PC-3 (cell line): ENCODE measurements at regions of chr3 and their contacts with region 1.

Region 1: DNA sequence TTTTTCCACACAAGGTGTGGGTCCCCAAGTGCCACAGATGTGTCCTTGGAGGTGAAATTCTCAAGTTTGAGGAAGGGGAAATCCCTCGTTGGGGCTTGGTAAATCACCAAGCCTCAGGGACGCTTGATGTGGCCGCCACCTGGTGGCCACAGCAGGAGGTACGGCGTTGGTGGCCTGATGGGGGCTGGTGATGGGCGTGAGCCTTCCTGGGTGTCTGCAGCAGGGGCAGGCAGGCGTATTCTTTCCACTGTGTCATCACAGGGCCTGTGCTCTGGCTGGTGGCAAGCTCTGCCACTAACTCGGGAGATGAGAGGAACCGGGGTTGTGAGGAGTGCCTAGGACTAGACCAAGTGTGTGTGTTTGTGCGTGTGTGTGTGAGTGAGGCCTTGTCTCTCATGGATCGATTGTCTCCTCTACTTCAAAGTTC is 4.2 kb downstream of the ACOX2 start:
- DNase-seq: peak; percentile 90
- ATAC-seq: peak; percentile 87
- H3K4me3 ChIP-seq: no peak overlapping the region
- H3K27ac ChIP-seq: no peak overlapping the region
- H3K4me1 ChIP-seq: peaks cover 12% of the 10 kb centered on the region; the same call in 1 of the 2 replicates
- H3K27me3 ChIP-seq: no peaks in the 10 kb centered on the region
- CTCF ChIP-seq: peak; percentile 97

Region 2: DNA sequence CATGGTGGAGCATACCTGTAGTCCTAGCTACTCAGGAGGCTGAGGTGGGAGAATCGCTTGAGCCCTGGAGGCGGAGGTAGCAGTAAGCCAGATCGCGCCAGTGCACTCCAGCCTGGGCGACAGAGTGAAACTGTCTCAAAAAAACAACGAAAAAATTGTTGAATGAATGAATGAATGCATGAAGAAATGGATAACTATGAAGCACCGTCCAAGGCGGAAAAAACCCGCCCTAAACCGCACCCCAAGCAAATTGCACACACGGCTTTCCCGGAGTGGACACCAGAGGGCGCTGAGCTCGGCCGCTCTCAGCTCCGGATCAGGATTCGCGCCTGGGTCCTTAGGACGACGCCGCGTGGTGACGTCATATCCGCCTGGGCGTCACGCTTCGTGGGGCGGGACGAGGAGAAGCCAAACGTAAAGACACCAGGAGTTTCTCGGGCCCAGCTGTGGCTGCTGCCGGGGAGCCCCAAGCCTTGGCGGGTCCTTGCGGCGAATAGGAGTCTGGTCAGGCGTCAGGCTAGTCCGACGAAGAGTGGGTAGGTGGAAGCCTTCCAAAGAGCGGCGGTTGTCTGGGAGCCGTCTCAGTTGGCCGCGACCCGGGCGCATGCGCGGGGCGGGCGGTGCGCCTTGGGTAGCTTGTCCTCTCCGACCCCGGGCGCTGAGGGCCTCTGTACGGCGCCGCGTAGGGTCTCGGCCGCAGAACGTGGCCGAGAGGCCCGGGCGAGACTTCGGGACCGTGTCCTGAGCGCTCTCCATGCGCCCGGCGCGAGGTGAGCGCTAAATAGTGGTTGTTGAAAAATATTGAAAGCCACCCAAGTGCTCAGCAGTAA is 226.7 kb before region 1 on chr3 and contains the starts of genes HTD2 and RPP14:
- CTCF ChIA-PET with region 1: no interaction called
- POLR2A ChIA-PET with region 1: no interaction called
- intact Hi-C with region 1: loop called (anchors 2 kb)
- DNase-seq: peak; percentile 99
- ATAC-seq: peak; percentile 92
- H3K4me3 ChIP-seq: peak within 1 kb of the TSS; percentile 95
- H3K27ac ChIP-seq: peak within 1 kb of the TSS; percentile 75
- H3K4me1 ChIP-seq: peaks cover 11% of the 10 kb centered on the region
- H3K27me3 ChIP-seq: no peaks in the 10 kb centered on the region
- CTCF ChIP-seq: peak; percentile 90
- total RNA-seq, gene HTD2: 4.9 and 6.9 TPM in 2 replicates
- total RNA-seq, gene RPP14: 28.8 and 30.0 TPM in 2 replicates

Region 3: DNA sequence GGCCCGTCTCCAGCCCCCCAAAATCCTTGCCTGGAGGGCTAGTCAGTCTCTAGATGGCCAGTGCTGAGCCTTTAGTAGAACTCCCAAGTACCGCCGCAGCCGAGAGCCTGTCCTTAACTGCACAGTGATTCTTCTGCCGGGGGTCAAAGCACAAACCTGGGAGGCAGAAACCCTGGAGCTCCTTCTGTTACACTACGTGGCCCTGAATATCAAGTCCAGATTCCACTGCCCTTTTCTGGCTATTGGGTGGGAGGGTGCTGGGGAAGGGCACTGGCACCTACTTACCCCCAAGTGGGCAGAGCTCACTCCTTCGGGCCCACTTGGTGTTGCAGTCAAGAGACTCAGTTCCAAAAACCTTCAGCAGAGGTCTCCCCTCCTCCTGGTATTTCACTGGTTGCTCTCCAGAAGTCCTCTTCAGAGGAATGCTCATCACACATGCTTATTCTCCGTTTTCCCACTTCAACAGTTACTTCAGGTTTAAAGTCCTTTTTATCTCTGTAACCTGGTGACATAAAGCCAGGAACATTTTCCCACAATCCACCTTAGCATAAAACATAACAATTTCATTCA is 110.0 kb before region 1 on chr3:
- CTCF ChIA-PET with region 1: no interaction called
- POLR2A ChIA-PET with region 1: interaction called, 3 read pairs
- intact Hi-C with region 1: loop called (anchors 1 kb)
- DNase-seq: peak; percentile 40
- ATAC-seq: peak; percentile 6; the same call in 1 of the 2 replicates
- H3K4me3 ChIP-seq: no peak overlapping the region
- H3K27ac ChIP-seq: no peak overlapping the region
- H3K4me1 ChIP-seq: peaks cover 18% of the 10 kb centered on the region
- H3K27me3 ChIP-seq: no peaks in the 10 kb centered on the region
- CTCF ChIP-seq: peak; percentile 45

Region 4: GRCh38 chr3:58471025-58471887 is 61.6 kb before region 1 on chr3:
- CTCF ChIA-PET with region 1: no interaction called
- POLR2A ChIA-PET with region 1: no interaction called
- intact Hi-C with region 1: loop called (anchors 2 kb)
- DNase-seq: peak; percentile 97
- ATAC-seq: peak; percentile 98
- H3K4me3 ChIP-seq: peak overlapping the region; percentile 6; the same call in 1 of the 2 replicates
- H3K27ac ChIP-seq: peak overlapping the region; percentile 83
- H3K4me1 ChIP-seq: peaks cover 27% of the 10 kb centered on the region
- H3K27me3 ChIP-seq: no peaks in the 10 kb centered on the region
- CTCF ChIP-seq: no peak

Region 5: GRCh38 chr3:58560771-58561311 is 28.0 kb after region 1 on chr3:
- CTCF ChIA-PET with region 1: interaction called, 3 read pairs
- POLR2A ChIA-PET with region 1: interaction called, 14 read pairs
- intact Hi-C with region 1: no loop called
- DNase-seq: peak; percentile 94
- ATAC-seq: peak; percentile 49
- H3K4me3 ChIP-seq: no peak overlapping the region
- H3K27ac ChIP-seq: peak overlapping the region; percentile 44
- H3K4me1 ChIP-seq: peaks cover 42% of the 10 kb centered on the region
- H3K27me3 ChIP-seq: no peaks in the 10 kb centered on the region
- CTCF ChIP-seq: peak; percentile 81

Region 6: DNA sequence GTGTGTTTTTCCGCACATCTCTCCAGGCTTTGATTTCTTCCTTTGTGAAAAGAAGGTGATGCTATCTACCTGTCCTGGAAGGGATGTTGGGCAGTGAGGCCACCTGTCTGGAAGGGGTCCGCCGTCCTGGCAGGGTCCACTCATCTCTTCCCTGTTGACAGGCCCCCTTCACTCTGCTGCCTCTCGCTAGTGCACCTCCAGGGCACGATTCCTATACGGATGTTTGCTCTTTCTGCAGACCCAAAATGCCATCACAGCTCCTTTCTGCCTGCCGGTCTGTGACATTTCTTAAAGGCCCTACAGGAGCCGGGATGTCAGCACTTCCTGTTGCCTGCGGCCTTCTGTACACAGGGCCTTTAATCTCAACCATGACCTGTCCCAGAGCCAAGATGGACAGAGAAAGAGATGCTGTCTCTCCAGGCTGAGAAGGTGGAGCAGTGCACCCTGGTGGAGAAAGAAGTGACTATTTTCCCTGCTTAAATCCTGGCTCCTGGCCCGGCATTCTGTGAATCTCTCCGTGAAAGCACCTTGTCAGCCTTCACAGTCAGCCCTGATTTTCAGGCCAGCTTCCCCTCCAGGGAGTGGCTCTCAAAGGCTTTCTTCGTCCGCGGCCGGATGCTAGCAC is 126.4 kb after region 1 on chr3:
- CTCF ChIA-PET with region 1: no interaction called
- POLR2A ChIA-PET with region 1: no interaction called
- intact Hi-C with region 1: no loop called
- DNase-seq: peak; percentile 68
- ATAC-seq: peak; percentile 80
- H3K4me3 ChIP-seq: no peak overlapping the region
- H3K27ac ChIP-seq: no peak overlapping the region
- H3K4me1 ChIP-seq: no peaks in the 10 kb centered on the region
- H3K27me3 ChIP-seq: 0 out of 2 replicates have a peak, but pooled peaks cover 5% of the 10 kb centered on the region
- CTCF ChIP-seq: peak; percentile 66